ENCODE measurements at regions of chr1 and their contacts with region 1.

Region 1: GRCh38 chr1:156500797-156501499 is 373 bp upstream of the MEF2D start:
- DNase-seq: peak; percentile 95 to 96
- ATAC-seq: peak; percentile 65 to 90 (median 80)
- H3K4me3 ChIP-seq: peak overlapping the region; percentile 71 to 100 (median 94)
- H3K27ac ChIP-seq: peak overlapping the region; percentile 97 to 100 (median 100)
- H3K4me1 ChIP-seq: peaks cover 44 to 76% (median 72%) of the 10 kb centered on the region in 9 donors
- H3K27me3 ChIP-seq: no peaks in the 10 kb centered on the region
- CTCF ChIP-seq: peak; percentile 7 to 75 (median 63)

Region 2: GRCh38 chr1:156456622-156457465 is 44.1 kb before region 1 on chr1:
- intact Hi-C with region 1: loop called in 7 of 10 experiments (anchors 1 to 5 kb)
- DNase-seq: peak; percentile 96 to 98
- ATAC-seq: peak; percentile 93 to 96 (median 95)
- H3K4me3 ChIP-seq: peak overlapping the region; percentile 26 to 71 (median 64)
- H3K27ac ChIP-seq: peak overlapping the region; percentile 95 to 100 (median 99)
- H3K4me1 ChIP-seq: peaks cover 0 to 26% (median 11%) of the 10 kb centered on the region in 9 donors
- H3K27me3 ChIP-seq: no peaks in the 10 kb centered on the region
- CTCF ChIP-seq: no peak

Region 3: DNA sequence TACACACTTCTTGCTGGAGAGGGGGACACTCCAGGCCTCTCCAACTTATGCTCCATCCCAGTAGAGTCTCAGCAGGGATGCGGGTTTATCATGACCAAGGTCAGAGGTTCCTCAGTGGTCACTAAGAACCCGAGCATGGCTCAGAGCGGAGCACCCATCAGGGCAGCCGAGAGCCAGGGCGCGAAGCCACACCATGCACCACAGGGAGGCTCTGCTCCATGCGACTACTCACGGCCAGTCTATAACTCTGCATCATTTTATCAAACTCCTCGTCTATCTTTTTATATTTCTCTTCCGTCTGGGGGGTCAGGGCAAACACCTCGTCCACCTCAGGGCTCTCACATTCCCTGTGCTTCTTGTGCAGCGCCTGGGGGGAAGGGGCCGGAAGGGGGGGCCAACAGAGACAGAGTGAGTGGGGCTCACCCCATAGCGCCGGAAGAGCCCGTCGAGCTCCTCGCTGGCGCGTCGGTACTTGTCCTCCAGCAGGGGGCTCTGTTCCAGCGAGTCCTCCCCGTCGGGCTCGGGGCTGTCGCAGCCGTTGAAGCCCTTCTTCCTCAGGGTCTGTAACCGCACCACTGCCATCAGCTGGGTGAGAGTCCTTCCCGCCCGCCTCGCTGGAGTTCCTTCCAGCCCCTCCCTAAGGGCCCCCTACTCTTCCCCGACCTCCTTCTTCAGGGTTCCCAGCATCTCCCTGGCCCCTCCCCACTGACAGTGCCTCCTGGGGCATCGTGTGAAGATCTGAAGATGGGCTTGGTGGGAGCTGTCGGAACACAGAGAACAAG is 20.3 kb before region 1 on chr1:
- intact Hi-C with region 1: loop called in 1 of 10 experiments (anchors 2 kb)
- DNase-seq: peak; percentile 65 to 71
- ATAC-seq: peak; percentile 7 to 60 (median 37)
- H3K4me3 ChIP-seq: no peak overlapping the region
- H3K27ac ChIP-seq: peak overlapping the region in 9 of 10 donors; percentile 27 to 92 (median 73)
- H3K4me1 ChIP-seq: peaks cover 48 to 100% (median 94%) of the 10 kb centered on the region in 9 donors
- H3K27me3 ChIP-seq: no peaks in the 10 kb centered on the region
- CTCF ChIP-seq: peak; percentile 23 to 84 (median 67)

Region 4: DNA sequence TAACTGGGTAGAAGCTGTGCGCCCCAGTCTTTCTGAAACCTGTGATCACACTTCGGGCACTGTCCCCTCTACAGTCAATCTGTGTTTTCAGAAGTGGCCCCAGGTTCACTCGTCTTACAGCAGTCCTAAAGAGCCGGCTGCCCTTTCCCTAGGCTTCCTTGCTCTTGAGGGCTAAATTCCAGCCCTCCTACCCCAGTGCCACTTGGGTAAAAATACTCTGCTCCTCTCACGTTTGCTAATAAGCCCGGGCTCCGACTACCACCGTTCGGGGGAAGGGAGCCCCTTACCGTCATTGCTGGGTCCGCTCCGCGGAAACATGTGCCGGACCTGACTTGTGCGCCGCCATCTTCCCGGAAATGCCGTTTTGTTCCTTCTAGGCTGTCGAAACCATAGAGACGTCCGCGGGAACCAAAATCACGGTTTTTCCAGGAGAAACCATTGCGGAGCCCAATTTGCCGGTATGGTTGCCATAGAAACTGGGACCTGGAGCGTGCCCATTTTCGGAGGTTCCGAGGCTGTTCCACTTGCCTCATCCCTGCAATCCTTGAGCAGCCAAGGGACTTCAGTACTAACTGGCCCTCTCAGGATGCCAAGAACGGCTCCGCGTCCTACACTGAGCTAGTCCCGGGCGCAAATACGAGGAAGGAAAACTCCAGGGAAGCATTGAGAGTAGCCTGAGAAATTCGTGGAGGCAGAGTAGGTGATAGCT is 100.3 kb after region 1 on chr1 and contains the start of gene GPATCH4:
- intact Hi-C with region 1: loop called in 1 of 10 experiments (anchors 5 kb)
- DNase-seq: peak; percentile 59 to 84
- ATAC-seq: peak; percentile 78 to 92 (median 87)
- H3K4me3 ChIP-seq: peak within 1 kb of the TSS; percentile 34 to 85 (median 70)
- H3K27ac ChIP-seq: peak within 1 kb of the TSS in 9 of 10 donors; percentile 57 to 84 (median 80)
- H3K4me1 ChIP-seq: peaks cover 7 to 25% (median 15%) of the 10 kb centered on the region in 9 donors
- H3K27me3 ChIP-seq: no peaks in the 10 kb centered on the region
- CTCF ChIP-seq: no peak
- total RNA-seq, gene GPATCH4: 9.3 to 25.4 (median 13.3) TPM

Region 5: GRCh38 chr1:156740679-156741612 is 240.0 kb after region 1 on chr1 and contains the start of gene MRPL24:
- intact Hi-C with region 1: loop called in 1 of 10 experiments (anchors 10 kb)
- DNase-seq: peak; percentile 96 to 99
- ATAC-seq: peak; percentile 89 to 97 (median 94)
- H3K4me3 ChIP-seq: peak within 1 kb of the TSS; percentile 33 to 87 (median 74)
- H3K27ac ChIP-seq: peak within 1 kb of the TSS; percentile 59 to 96 (median 88)
- H3K4me1 ChIP-seq: peaks cover 5 to 51% (median 29%) of the 10 kb centered on the region in 9 donors
- H3K27me3 ChIP-seq: no peaks in the 10 kb centered on the region
- CTCF ChIP-seq: no peak
- total RNA-seq, gene MRPL24: 70.3 to 105 (median 86.7) TPM